ENCODE measurements at regions of chr6 and their contacts with region 1.

Region 1: DNA sequence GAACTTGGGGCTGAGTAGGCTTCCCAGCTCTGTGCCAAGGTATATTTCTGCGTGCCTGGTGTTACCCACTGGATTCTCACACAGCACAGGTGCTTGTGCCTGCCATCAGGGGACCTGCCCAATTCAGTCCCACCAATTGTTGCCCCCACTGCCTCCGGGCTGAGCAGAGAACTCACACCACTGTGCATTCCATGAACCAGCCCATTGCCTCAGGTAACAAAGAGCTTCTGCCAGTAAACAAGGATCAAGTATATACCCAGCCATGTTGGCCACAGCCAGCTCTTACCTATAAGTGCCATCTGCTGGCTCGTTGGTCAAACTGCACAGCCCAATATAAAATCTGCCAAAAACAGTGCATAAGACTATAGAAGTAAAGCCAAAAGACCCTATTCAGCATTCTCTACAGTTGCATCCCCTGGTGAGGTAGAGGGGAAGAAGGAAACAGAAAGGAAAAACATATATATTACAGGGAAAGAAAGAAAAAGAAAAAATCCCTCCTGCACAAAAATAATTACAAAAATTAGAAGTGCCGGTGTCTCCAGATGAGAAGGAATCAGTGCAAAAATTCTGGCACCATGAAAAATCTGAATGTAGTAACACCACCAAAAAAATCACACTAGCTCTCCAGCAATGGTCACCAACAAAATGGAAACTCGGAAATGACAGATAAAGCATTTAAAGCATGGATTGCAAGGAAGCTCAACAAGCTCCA is 241.4 kb downstream of the IBTK start:
- DNase-seq: peak in 1 of 2 experiments; percentile 41
- H3K4me3 ChIP-seq: no peak overlapping the region
- H3K4me3 Mint-ChIP-seq: no peak overlapping the region
- H3K27ac Mint-ChIP-seq: no peak overlapping the region
- H3K4me1 ChIP-seq: no peaks in the 10 kb centered on the region; the same call in 1 of the 2 replicates
- H3K4me1 Mint-ChIP-seq: no peaks in the 10 kb centered on the region
- H3K27me3 ChIP-seq: no peaks in the 10 kb centered on the region
- H3K27me3 Mint-ChIP-seq: no peaks in the 10 kb centered on the region
- CTCF ChIP-seq: peak; percentile 11 to 29

Region 2: DNA sequence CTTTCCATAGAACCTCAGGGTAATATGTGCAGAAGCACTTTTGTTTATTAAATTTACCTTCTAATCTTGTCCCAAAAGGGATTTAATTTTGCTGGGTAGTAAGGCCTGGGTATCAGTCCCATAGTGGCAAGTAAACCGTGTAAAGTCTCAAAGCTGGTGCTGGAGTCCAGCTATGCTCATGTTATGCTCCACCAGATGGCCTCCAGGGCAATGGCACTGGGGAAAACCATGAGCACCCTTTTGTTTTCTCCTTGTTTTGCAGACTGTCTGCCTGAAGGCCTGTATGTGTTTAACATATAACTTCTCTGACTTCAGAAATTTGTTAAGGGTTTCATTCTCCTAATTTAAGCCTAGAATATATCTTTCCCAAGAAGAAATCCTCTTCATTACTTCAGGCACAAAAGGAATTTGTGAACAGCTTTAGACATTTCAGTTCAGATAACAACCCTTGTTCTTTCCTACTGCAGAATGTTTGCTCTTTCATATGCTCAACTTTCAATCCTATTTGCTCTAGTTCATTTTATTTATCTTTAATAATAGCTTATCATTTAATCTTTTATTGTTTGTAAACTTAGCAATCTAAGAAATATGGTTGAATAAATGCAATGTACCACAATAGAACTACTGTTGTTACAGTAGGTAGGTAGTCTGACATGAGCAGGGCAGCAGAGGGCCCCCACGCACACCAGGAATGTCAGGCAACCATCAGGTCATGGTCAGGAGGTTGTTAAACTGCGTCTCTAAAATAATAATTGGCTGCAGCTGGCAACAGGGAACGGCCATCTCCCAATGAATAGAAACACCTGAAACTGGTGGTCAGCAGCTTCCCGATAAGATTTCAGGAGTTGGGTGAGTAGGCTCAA is 416.5 kb before region 1 on chr6:
- CTCF ChIA-PET with region 1: no interaction called
- POLR2A ChIA-PET with region 1: no interaction called
- intact Hi-C with region 1: loop called (anchors 1 kb)
- DNase-seq: peak; percentile 49 to 59
- H3K4me3 ChIP-seq: no peak overlapping the region
- H3K4me3 Mint-ChIP-seq: no peak overlapping the region
- H3K27ac Mint-ChIP-seq: peak overlapping the region; percentile 29
- H3K4me1 ChIP-seq: peaks cover 22% of the 10 kb centered on the region
- H3K4me1 Mint-ChIP-seq: peaks cover 18% of the 10 kb centered on the region
- H3K27me3 ChIP-seq: no peaks in the 10 kb centered on the region
- H3K27me3 Mint-ChIP-seq: no peaks in the 10 kb centered on the region
- CTCF ChIP-seq: peak in 1 of 2 experiments; percentile 50

Region 3: GRCh38 chr6:81938014-81938856 is 67.9 kb before region 1 on chr6:
- CTCF ChIA-PET with region 1: no interaction called
- POLR2A ChIA-PET with region 1: no interaction called
- intact Hi-C with region 1: loop called (anchors 2 kb)
- DNase-seq: peak; percentile 69 to 72
- H3K4me3 ChIP-seq: peak overlapping the region; percentile 12; the same call in 1 of the 2 replicates
- H3K4me3 Mint-ChIP-seq: peak overlapping the region; percentile 64
- H3K27ac Mint-ChIP-seq: peak overlapping the region; percentile 95
- H3K4me1 ChIP-seq: peaks cover 55% of the 10 kb centered on the region
- H3K4me1 Mint-ChIP-seq: peaks cover 40% of the 10 kb centered on the region
- H3K27me3 ChIP-seq: no peaks in the 10 kb centered on the region
- H3K27me3 Mint-ChIP-seq: no peaks in the 10 kb centered on the region
- CTCF ChIP-seq: no peak

Region 4: GRCh38 chr6:82430611-82431010 is 424.4 kb after region 1 on chr6:
- CTCF ChIA-PET with region 1: no interaction called
- POLR2A ChIA-PET with region 1: no interaction called
- intact Hi-C with region 1: no loop called
- DNase-seq: no peak
- H3K4me3 ChIP-seq: no peak overlapping the region
- H3K4me3 Mint-ChIP-seq: no peak overlapping the region
- H3K27ac Mint-ChIP-seq: no peak overlapping the region
- H3K4me1 ChIP-seq: no peaks in the 10 kb centered on the region
- H3K4me1 Mint-ChIP-seq: no peaks in the 10 kb centered on the region
- H3K27me3 ChIP-seq: no peaks in the 10 kb centered on the region
- H3K27me3 Mint-ChIP-seq: no peaks in the 10 kb centered on the region
- CTCF ChIP-seq: no peak